ENCODE measurements at regions of chr1 and their contacts with region 1.

Region 1: GRCh38 chr1:13960375-13960987 is 260.5 kb downstream of the PRDM2 start:
- DNase-seq: peak; percentile 64 to 79
- ATAC-seq: peak; percentile 70 to 90 (median 77)
- H3K4me3 ChIP-seq: no peak overlapping the region
- H3K27ac ChIP-seq: no peak overlapping the region
- H3K4me1 ChIP-seq: no peaks in the 10 kb centered on the region
- H3K27me3 ChIP-seq: peaks cover 0 to 13% (median 5%) of the 10 kb centered on the region in 3 donors
- CTCF ChIP-seq: peak; percentile 94

Region 2: DNA sequence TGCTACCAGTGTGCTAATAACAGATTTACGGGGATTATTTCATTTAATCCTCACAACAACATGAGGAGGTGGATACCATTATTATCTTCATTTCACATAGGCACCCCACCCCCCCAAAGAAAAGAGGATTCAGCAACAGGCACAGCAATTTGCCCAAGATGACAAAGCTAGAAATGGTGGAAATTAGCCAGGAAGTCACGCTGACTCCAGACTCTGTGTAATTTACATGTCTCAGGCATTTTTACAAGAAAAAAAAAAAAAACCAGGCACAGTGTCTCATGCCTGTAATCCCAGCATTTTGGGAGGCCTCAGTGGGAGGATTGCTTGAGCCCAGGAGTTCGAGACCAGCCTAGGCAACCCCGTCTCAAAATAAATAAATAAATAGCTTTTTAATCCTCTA is 298.0 kb before region 1 on chr1:
- intact Hi-C with region 1: loop called (anchors 1 to 2 kb)
- DNase-seq: no peak
- ATAC-seq: peak in 2 of 4 donors; percentile 36 to 38
- H3K4me3 ChIP-seq: no peak overlapping the region
- H3K27ac ChIP-seq: no peak overlapping the region
- H3K4me1 ChIP-seq: no peaks in the 10 kb centered on the region
- H3K27me3 ChIP-seq: no peaks in the 10 kb centered on the region
- CTCF ChIP-seq: no peak

Region 3: GRCh38 chr1:13828454-13829151 is 131.9 kb before region 1 on chr1:
- intact Hi-C with region 1: loop called (anchors 10 kb)
- DNase-seq: peak in 1 of 2 donors; percentile 67
- ATAC-seq: peak; percentile 40 to 67 (median 59)
- H3K4me3 ChIP-seq: no peak overlapping the region
- H3K27ac ChIP-seq: no peak overlapping the region
- H3K4me1 ChIP-seq: no peaks in the 10 kb centered on the region
- H3K27me3 ChIP-seq: no peaks in the 10 kb centered on the region
- CTCF ChIP-seq: peak; percentile 43

Region 4: GRCh38 chr1:14027099-14027498 is 66.6 kb after region 1 on chr1:
- intact Hi-C with region 1: no loop called
- DNase-seq: no peak
- ATAC-seq: no peak
- H3K4me3 ChIP-seq: no peak overlapping the region
- H3K27ac ChIP-seq: no peak overlapping the region
- H3K4me1 ChIP-seq: no peaks in the 10 kb centered on the region
- H3K27me3 ChIP-seq: no peaks in the 10 kb centered on the region
- CTCF ChIP-seq: no peak

Region 5: DNA sequence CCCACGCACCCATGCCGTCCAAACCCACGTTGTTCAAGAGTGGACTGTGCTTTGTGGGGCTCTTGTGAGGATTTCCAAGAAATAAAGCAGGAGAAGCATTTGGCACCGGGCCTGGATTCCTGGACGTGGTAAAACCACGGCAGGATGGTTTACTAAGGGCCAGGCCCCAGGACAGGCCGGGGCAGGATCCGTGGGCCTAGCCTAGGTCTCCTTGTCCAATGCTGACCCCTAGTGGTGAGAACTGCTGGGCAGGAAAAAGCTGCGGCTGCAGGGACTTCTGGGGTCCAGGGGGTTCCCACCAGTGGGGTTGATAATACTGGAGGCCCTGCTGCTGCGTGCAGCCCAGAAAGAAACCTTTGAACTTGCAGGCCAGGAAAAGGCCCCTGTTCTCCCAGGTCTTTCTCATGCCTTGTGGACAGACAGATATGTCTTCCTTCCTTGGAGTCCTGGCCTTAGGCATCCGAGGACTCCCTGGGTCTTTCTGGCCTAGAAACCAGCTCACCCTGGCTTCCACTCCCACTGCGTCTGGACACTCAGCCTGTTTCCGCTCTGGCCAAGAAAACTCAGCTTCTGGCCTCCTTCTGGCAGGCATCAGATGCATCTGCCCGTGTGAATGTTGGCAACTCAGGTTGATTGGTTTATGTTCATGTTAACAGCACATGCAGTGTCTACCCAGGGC is 1086.1 kb after region 1 on chr1:
- intact Hi-C with region 1: loop called in 1 of 2 experiments (anchors 10 kb)
- DNase-seq: peak; percentile 71 to 75
- ATAC-seq: peak in 3 of 4 donors; percentile 44 to 71 (median 54)
- H3K4me3 ChIP-seq: no peak overlapping the region
- H3K27ac ChIP-seq: no peak overlapping the region
- H3K4me1 ChIP-seq: no peaks in the 10 kb centered on the region
- H3K27me3 ChIP-seq: no peaks in the 10 kb centered on the region
- CTCF ChIP-seq: peak; percentile 78

Measured in psoas muscle (tissue), 8 donors.